ENCODE measurements at regions of chr7 and their contacts with region 1.

Region 1: DNA sequence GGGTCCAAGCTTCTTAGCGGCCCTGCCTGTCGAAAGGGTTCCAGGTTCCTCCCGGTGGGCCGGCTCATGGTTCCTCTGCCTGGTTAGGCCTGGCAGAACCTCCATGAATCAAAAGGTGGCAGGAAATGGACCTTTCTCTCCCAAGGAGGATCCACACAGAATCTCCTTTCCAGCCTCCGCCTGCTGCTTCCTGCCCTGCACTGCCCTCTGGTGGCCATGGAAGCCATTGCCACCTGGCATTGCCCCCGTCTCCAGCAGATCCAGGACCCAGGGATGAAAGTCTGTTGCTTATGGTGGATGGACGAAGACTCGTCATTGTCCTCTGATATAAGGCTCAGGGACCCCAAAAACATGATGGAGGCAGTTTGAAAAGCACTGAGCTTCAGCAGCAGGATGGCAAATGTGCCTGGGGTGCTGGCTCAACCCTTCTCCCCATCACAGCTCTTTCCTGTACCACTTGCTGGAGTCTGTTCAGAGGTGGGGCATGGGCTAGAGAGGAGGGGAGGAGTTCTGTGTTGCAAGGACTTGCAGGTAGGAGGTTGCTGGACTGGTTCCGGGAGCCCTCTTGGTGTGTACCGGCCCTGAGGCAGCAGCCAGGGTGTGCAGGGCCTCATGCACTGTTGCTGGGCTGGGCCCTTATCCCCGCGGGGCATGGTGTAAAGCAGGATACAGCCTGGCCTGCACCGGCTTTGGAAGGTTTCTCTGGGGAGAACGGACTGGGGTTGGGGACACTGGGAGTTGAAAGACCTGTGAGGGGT is 11.3 kb upstream of the INMT start:
- DNase-seq: peak; percentile 56 to 96
- ATAC-seq: peak; percentile 81 to 92
- H3K4me3 ChIP-seq: no peak overlapping the region
- H3K27ac ChIP-seq: no peak overlapping the region
- H3K4me1 ChIP-seq: no peaks in the 10 kb centered on the region
- CTCF ChIP-seq: peak; percentile 92
- EP300 ChIP-seq: no peak
- POLR2A ChIP-seq: no peak
- RAD21 ChIP-seq: peak; percentile 91 to 96

Region 2: GRCh38 chr7:30548762-30549344 is 191.8 kb before region 1 on chr7:
- CTCF ChIA-PET with region 1: interaction called, 18 read pairs
- POLR2A ChIA-PET with region 1: no interaction called
- DNase-seq: peak; percentile 69 to 79
- ATAC-seq: peak; percentile 94 to 97
- H3K4me3 ChIP-seq: no peak overlapping the region
- H3K27ac ChIP-seq: no peak overlapping the region
- H3K4me1 ChIP-seq: peaks cover 9% of the 10 kb centered on the region; the same call in 2 of the 3 replicates
- CTCF ChIP-seq: peak; percentile 73
- EP300 ChIP-seq: no peak
- POLR2A ChIP-seq: no peak
- RAD21 ChIP-seq: peak; percentile 47 to 57

Region 3: GRCh38 chr7:30652698-30653641 is 87.6 kb before region 1 on chr7:
- CTCF ChIA-PET with region 1: interaction called, 12 read pairs
- POLR2A ChIA-PET with region 1: no interaction called
- DNase-seq: no peak
- ATAC-seq: peak in 1 of 2 experiments; percentile 18; a peak in 1 of 6 replicates
- H3K4me3 ChIP-seq: no peak overlapping the region
- H3K27ac ChIP-seq: no peak overlapping the region
- H3K4me1 ChIP-seq: no peaks in the 10 kb centered on the region
- CTCF ChIP-seq: no peak
- EP300 ChIP-seq: no peak
- POLR2A ChIP-seq: no peak
- RAD21 ChIP-seq: no peak

Region 4: GRCh38 chr7:30702200-30702599 is 38.4 kb before region 1 on chr7:
- CTCF ChIA-PET with region 1: interaction called, 20 read pairs
- POLR2A ChIA-PET with region 1: no interaction called
- DNase-seq: no peak
- ATAC-seq: no peak; a peak in 2 of 6 replicates
- H3K4me3 ChIP-seq: no peak overlapping the region
- H3K27ac ChIP-seq: no peak overlapping the region
- H3K4me1 ChIP-seq: no peaks in the 10 kb centered on the region
- CTCF ChIP-seq: no peak
- EP300 ChIP-seq: no peak
- POLR2A ChIP-seq: no peak
- RAD21 ChIP-seq: no peak

Region 5: DNA sequence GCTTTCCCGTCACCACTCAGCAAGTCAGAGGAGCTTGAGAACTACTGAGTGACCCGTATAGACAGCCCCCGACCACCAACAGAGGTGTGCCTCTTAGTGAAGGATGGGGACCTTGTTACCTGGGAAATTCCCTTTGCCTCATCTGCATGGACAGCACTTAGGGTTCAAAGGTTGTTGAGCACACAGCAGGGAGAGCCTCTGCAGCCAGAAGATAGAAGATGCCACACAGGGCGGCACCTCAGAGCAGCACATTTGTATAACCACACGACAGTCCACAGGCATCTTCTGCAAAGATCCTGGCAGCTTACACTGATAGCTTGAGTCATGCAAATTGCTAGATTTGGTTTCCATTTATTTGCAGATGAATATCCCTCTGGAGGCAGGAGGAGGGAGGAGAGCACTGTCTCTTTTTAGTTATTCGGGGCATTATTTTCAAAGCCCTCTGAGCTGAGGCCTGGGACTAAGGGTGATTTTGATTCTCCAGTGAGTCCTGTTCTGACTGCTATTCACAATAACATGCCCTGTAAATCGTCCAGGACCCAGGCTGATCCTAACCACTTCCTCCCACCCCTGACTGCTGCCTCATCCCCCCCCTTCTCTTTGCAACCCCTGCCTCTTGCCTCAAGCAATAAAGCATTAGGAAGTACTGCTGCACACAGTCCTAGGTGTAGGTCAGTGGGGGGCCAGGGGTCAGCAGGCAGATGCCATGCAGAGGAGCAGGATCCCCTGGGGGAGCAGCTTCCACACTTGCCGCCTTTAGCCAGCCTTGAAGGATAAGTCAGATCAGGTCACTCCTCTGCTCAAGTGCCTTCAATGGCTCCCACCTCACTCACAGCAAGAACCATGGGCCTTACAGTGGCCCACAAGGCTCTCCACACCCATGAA is 13.3 kb before region 1 on chr7:
- CTCF ChIA-PET with region 1: interaction called, 48 read pairs
- POLR2A ChIA-PET with region 1: no interaction called
- DNase-seq: no peak
- ATAC-seq: no peak; a peak in 1 of 6 replicates
- H3K4me3 ChIP-seq: no peak overlapping the region
- H3K27ac ChIP-seq: no peak overlapping the region
- H3K4me1 ChIP-seq: peaks cover 6% of the 10 kb centered on the region; the same call in 2 of the 3 replicates
- CTCF ChIP-seq: no peak
- EP300 ChIP-seq: no peak
- POLR2A ChIP-seq: no peak
- RAD21 ChIP-seq: no peak

Region 6: GRCh38 chr7:30761214-30762156 is 20.9 kb after region 1 on chr7:
- CTCF ChIA-PET with region 1: interaction called, 15 read pairs
- POLR2A ChIA-PET with region 1: no interaction called
- DNase-seq: no peak
- ATAC-seq: no peak
- H3K4me3 ChIP-seq: no peak overlapping the region
- H3K27ac ChIP-seq: no peak overlapping the region
- H3K4me1 ChIP-seq: no peaks in the 10 kb centered on the region
- CTCF ChIP-seq: no peak
- EP300 ChIP-seq: no peak
- POLR2A ChIP-seq: no peak
- RAD21 ChIP-seq: no peak

Region 7: DNA sequence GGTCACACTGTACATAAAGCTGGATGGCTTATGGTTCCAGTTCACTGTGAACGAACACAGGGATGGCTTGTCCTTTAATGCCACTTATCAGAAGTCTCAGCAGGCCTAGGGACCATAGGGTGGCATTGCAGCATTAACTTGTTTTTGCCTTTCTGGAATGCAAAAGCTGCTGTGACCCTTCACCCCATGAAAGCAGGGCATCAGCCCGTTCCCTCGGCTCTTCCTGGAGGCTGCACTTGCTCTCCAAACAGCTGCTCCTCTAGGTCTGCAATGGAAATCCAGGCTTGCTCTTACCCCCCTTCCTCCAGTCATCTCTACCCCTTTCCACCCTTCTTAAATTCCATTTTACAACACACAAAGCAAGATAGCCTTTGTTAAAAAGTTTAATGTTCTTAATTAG is 617.9 kb after region 1 on chr7:
- CTCF ChIA-PET with region 1: no interaction called
- POLR2A ChIA-PET with region 1: no interaction called
- DNase-seq: no peak
- ATAC-seq: no peak
- H3K4me3 ChIP-seq: no peak overlapping the region
- H3K27ac ChIP-seq: no peak overlapping the region
- H3K4me1 ChIP-seq: peaks cover 7% of the 10 kb centered on the region; the same call in 1 of the 3 replicates
- CTCF ChIP-seq: no peak
- EP300 ChIP-seq: no peak
- POLR2A ChIP-seq: no peak
- RAD21 ChIP-seq: no peak

Region 8: DNA sequence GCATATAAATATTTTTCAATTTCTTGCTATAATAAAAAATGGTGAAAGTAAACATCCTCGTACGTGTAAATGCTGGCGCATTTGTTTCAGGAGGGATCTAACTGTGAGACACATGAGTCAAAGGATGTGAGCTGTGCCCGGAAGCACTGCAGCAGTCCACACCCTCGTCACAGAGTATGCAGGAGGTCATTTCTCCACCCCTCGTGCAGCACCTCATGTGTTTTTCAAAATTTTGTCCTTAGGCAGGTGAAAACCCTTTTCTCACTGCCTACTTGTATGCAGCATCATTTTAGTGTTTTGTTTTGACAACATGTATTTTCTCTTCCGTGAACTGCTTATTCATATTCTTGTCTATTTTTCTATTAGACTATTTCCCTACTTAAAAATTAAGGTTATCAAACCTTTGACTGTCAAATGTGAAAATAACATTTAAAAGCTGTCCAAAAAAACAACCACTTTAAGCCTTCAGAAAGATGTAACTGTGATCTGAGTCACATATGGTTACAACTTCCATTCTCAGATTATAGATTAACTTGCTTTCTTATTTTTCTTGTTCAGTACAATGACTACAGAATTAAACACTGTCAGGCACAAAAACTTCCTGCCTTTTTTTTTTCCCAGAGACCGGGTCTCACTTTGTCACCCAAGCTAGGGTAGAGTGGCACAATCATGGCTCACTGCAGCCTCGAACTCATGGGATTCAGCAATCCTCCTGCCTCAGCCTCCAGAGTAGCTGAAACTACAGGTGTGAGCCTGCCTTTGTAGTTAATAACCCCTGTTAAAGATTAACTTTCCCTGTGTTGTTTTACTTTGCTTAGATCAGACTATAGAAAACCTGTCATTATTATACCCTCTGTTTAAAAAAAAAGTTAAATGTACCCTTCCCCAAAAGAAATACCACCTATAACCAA is 1917.7 kb after region 1 on chr7:
- CTCF ChIA-PET with region 1: no interaction called
- POLR2A ChIA-PET with region 1: no interaction called
- DNase-seq: peak; percentile 35 to 90
- ATAC-seq: peak; percentile 96 to 99
- H3K4me3 ChIP-seq: 0 out of 3 replicates have a peak overlapping the region, but pooled peaks have one; percentile 1
- H3K27ac ChIP-seq: peak overlapping the region; percentile 77 to 80
- H3K4me1 ChIP-seq: peaks cover 67% of the 10 kb centered on the region
- CTCF ChIP-seq: no peak
- EP300 ChIP-seq: peak in 1 of 2 experiments; percentile 17; a peak in 1 of 5 replicates
- POLR2A ChIP-seq: no peak
- RAD21 ChIP-seq: no peak

Measured in A549 (cell line).